ENCODE measurements at regions of chr17 and their contacts with region 1.

Region 1: DNA sequence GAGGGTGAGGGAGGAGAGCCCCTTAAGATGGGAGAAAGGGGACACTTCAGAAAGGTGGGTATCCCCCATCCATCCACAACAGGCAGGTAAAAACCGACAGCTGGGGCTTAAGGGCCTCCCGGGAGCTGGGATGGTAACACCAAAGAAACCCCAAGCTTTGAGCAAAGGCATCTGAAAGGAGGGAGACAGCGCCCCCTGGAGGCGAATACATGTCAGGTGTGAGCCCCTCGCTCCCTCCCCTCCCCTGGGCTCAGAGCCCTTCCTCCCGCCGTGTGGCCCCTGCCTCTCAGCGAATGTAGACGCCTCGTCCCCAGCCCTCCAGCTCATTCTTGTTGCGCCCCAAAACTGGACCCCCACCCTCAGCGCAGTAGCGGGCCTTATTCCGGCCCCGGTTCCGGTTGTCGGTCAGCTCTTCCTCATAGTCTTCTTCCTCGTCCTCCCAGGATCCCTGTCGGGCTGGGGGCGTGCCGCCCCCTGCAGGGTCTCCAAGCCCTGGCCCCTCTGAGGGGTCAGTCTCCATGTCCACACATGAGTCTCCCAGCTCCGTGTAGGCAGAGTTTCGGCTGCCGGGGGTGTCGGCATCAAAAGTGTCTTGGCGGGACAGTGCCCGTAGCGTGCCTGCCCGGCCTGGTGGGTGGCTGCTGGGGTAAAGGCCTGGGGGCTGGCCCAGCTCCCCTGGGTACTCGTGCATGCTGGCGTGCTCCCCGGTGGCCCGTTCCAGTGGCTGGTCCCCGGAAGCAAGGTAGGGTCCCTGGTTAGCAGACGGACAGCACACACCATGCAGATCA is 9.1 kb upstream of the ARL5C start:
- DNase-seq: peak; percentile 58
- H3K4me3 Mint-ChIP-seq: no peak overlapping the region
- H3K27ac Mint-ChIP-seq: no peak overlapping the region
- H3K4me1 Mint-ChIP-seq: peaks cover 7% of the 10 kb centered on the region
- H3K27me3 Mint-ChIP-seq: peaks cover 5% of the 10 kb centered on the region

Region 2: DNA sequence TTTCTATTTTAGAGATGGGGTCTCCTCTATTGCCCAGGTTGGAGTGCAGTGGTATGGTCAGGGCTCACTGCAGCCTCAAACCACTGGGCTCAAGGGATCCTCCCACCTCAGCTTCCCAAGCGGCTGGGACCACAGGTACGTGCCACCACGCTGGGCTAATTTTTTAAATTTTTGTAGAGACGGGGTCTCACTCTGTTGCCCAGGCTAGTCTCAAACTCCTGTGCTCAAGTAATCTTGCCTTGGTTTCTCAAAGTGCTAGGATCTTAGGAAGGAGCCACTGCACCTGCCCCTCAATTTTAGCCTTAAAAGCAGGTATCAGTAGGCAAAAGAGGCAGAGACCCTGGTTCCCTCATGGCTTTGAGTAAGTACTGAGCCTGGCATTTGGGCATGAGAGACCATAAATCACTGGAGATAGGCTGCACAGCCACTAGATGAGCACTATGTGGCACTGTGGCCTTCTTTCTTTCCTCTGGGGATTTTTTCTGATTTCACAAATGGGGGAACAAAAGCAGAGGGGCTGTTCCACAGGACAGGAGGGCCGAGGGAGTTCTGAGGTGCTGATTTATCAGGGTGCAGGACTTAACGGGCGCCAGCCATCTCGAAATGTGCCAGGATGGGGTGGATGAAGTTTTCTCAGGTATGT is 105.9 kb before region 1 on chr17:
- intact Hi-C with region 1: loop called (anchors 1 kb)
- DNase-seq: no peak
- H3K4me3 Mint-ChIP-seq: no peak overlapping the region
- H3K27ac Mint-ChIP-seq: no peak overlapping the region
- H3K4me1 Mint-ChIP-seq: peaks cover 12% of the 10 kb centered on the region
- H3K27me3 Mint-ChIP-seq: peaks cover 1% of the 10 kb centered on the region

Region 3: GRCh38 chr17:39164675-39165143 is 10.4 kb before region 1 on chr17:
- intact Hi-C with region 1: loop called (anchors 1 kb)
- DNase-seq: peak; percentile 62
- H3K4me3 Mint-ChIP-seq: peak overlapping the region; percentile 80
- H3K27ac Mint-ChIP-seq: peak overlapping the region; percentile 2
- H3K4me1 Mint-ChIP-seq: peaks cover 29% of the 10 kb centered on the region
- H3K27me3 Mint-ChIP-seq: peaks cover 28% of the 10 kb centered on the region

Region 4: DNA sequence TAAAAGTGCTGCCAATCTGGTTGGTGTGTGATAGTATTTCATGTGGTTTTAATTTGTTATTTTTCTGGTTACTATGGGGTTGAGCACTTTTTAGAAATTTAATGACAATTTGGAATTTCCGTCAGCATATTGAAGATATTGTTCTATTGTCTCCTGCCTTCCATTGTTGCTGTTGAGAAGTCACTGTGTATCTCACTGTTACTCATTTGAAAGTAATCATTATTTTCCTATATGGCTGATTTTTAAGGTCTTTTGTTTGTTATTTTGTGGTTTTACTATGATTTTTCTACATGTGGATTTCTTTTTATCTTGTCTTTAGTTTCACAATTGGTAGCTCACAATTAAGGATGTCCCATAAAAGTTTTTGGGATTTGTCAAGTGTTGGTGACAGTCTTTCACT is 1588.7 kb after region 1 on chr17:
- intact Hi-C with region 1: no loop called
- DNase-seq: no peak
- H3K4me3 Mint-ChIP-seq: no peak overlapping the region
- H3K27ac Mint-ChIP-seq: no peak overlapping the region
- H3K4me1 Mint-ChIP-seq: no peaks in the 10 kb centered on the region
- H3K27me3 Mint-ChIP-seq: peaks cover 21% of the 10 kb centered on the region

Measured in activated T-helper 1 cell treated with anti-CD3 and anti-CD28 coated beads, Interleukin-12 subunit alpha, Interleukin-12 subunit beta, Interleukin-2, Interleukin-4 antibody, amounts not matched to agents 30 ng/mL and 10 ng/mL and 1 ng/mL, durations not matched to agents 14 hours and 24 hours and 36 hours (primary cell).